Activated CD8-positive, alpha-beta memory T cell treated with anti-CD3 and anti-CD28 coated beads, Interleukin-2, amount 10 ng/mL, durations not matched to agents 7 days and 5 days (primary cell): ENCODE measurements at regions of chr11 and their contacts with region 1.

Region 1: GRCh38 chr11:43358801-43359421 is at the start of gene TTC17:
- DNase-seq: peak; percentile 97
- ATAC-seq: peak; percentile 95
- H3K4me3 Mint-ChIP-seq: peak within 1 kb of the TSS; percentile 88
- H3K27ac Mint-ChIP-seq: peak within 1 kb of the TSS; percentile 96
- H3K4me1 Mint-ChIP-seq: peaks cover 47% of the 10 kb centered on the region
- H3K27me3 Mint-ChIP-seq: no peaks in the 10 kb centered on the region
- total RNA-seq, gene TTC17: 55.7 to 91.9 TPM

Region 2: GRCh38 chr11:43341159-43341558 is 17.8 kb before region 1 on chr11:
- CTCF ChIA-PET with region 1: no interaction called
- DNase-seq: no peak
- ATAC-seq: no peak
- H3K4me3 Mint-ChIP-seq: no peak overlapping the region
- H3K27ac Mint-ChIP-seq: no peak overlapping the region
- H3K4me1 Mint-ChIP-seq: no peaks in the 10 kb centered on the region
- H3K27me3 Mint-ChIP-seq: no peaks in the 10 kb centered on the region

Region 3: GRCh38 chr11:43419460-43419859 is 60.5 kb after region 1 on chr11:
- CTCF ChIA-PET with region 1: interaction called, 13 read pairs
- DNase-seq: peak; percentile 70
- ATAC-seq: peak; percentile 80
- H3K4me3 Mint-ChIP-seq: no peak overlapping the region
- H3K27ac Mint-ChIP-seq: peak overlapping the region; percentile 60
- H3K4me1 Mint-ChIP-seq: peaks cover 6% of the 10 kb centered on the region
- H3K27me3 Mint-ChIP-seq: no peaks in the 10 kb centered on the region

Region 4: DNA sequence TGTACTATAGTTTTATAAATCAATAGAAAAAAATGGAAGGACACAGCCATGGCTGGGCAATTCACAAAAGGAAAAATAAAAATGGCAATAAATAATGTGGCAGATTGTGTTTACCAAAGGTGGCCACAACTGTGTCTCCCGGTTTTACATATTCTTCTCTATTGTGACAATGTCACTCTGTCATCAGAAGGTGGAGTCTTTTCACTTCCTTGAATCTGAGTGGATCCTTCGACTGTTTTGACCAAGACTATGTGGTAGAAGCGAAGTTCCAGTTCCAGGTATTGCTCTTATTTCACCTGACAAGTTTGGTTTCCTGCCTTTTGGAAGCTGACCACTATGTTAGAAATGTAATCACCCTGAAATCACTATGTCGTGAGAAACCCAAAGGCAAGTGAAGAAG is 290.6 kb after region 1 on chr11:
- CTCF ChIA-PET with region 1: no interaction called
- DNase-seq: no peak
- ATAC-seq: no peak
- H3K4me3 Mint-ChIP-seq: no peak overlapping the region
- H3K27ac Mint-ChIP-seq: no peak overlapping the region
- H3K4me1 Mint-ChIP-seq: peaks cover 12% of the 10 kb centered on the region
- H3K27me3 Mint-ChIP-seq: peaks cover 3% of the 10 kb centered on the region